CD8-positive, alpha-beta memory T cell (primary cell): ENCODE measurements at regions of chr3 and their contacts with region 1.

Region 1: DNA sequence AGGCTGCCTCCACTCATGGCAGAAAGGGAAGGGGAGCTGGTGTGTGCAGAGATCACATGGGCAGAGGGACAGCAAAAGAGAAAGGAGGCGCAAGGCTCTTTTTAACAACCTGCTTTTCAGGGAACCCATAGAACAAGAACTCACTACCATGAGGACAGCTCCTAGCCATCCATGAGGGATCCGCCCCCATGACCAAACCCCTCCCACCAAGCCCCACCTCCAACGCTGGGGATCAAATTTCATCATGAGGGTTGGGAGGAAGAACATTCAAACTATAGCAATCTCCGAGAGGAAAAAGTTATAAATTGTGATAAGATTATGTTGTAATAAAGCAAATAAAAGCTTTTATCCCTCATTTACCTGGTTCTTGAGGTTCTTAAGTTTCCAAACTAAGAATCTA is 84.7 kb upstream of the LMCD1 start:
- DNase-seq: no peak
- H3K4me3 ChIP-seq: no peak overlapping the region
- H3K4me3 Mint-ChIP-seq: no peak overlapping the region
- H3K27ac ChIP-seq: no peak overlapping the region
- H3K27ac Mint-ChIP-seq: peak overlapping the region in 3 of 8 donors; percentile 35 to 63 (median 44)
- H3K4me1 ChIP-seq: peaks cover 5% of the 10 kb centered on the region
- H3K4me1 Mint-ChIP-seq: peaks cover 5 to 8% (median 8%) of the 10 kb centered on the region in 3 donors
- H3K27me3 ChIP-seq: no peaks in the 10 kb centered on the region
- H3K27me3 Mint-ChIP-seq: peaks cover 3% of the 10 kb centered on the region in 2 donors

Region 2: DNA sequence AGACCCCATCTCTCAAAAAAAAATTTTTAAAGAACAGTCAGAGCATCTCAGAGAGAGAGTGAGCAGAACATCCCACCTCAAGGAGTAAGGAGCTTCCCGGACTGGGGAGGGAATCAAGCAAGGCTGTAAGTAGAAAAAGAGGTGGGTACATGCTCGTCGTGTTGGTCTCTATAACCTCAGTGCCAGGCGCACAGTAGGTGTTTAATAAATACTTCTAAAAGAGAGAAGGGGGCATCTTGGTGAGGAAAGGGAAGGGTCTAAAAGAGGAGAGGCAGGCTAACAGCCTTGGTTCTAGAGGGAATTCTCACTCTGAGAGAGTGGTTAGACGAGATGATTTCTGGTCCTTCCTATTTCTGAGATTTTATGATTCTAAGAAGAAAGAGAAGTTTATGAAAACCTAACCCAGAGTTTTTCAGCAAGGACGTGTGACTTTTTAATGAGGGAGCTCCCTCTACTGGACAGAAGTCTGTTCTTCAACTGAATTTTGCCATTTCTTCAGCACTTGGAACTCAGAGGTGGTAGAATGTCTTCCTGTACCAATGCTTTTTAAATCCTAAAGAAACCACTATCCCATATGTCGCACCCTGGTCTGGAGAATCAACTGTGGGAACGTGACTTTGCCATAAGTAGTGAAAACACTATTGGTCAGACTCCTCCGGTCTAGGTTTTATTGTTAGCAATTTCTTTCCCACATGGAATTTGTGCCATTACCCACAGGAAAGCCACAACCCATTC is 115.1 kb before region 1 on chr3:
- CTCF ChIA-PET with region 1: interaction called, 17 read pairs
- POLR2A ChIA-PET with region 1: no interaction called
- DNase-seq: peak in 2 of 5 donors; percentile 23 to 25
- H3K4me3 ChIP-seq: no peak overlapping the region
- H3K4me3 Mint-ChIP-seq: no peak overlapping the region
- H3K27ac ChIP-seq: no peak overlapping the region
- H3K27ac Mint-ChIP-seq: peak overlapping the region in 5 of 8 donors; percentile 14 to 84 (median 64)
- H3K4me1 ChIP-seq: no peaks in the 10 kb centered on the region
- H3K4me1 Mint-ChIP-seq: peaks cover 5 to 6% (median 6%) of the 10 kb centered on the region in 3 donors
- H3K27me3 ChIP-seq: no peaks in the 10 kb centered on the region
- H3K27me3 Mint-ChIP-seq: peaks cover 0 to 2% of the 10 kb centered on the region in 2 donors

Region 3: GRCh38 chr3:8324740-8325139 is 92.2 kb before region 1 on chr3:
- CTCF ChIA-PET with region 1: interaction called, 103 read pairs
- POLR2A ChIA-PET with region 1: no interaction called
- DNase-seq: peak; percentile 17 to 61 (median 49)
- H3K4me3 ChIP-seq: no peak overlapping the region
- H3K4me3 Mint-ChIP-seq: no peak overlapping the region
- H3K27ac ChIP-seq: no peak overlapping the region
- H3K27ac Mint-ChIP-seq: peak overlapping the region in 1 of 8 donors; percentile 48
- H3K4me1 ChIP-seq: peaks cover 6% of the 10 kb centered on the region
- H3K4me1 Mint-ChIP-seq: peaks cover 15 to 28% (median 24%) of the 10 kb centered on the region in 3 donors
- H3K27me3 ChIP-seq: no peaks in the 10 kb centered on the region
- H3K27me3 Mint-ChIP-seq: peaks cover 6 to 8% of the 10 kb centered on the region in 2 donors

Region 4: GRCh38 chr3:8406177-8406878 is 10.6 kb before region 1 on chr3:
- CTCF ChIA-PET with region 1: interaction called, 15 read pairs
- POLR2A ChIA-PET with region 1: no interaction called
- DNase-seq: no peak
- H3K4me3 ChIP-seq: no peak overlapping the region
- H3K4me3 Mint-ChIP-seq: no peak overlapping the region
- H3K27ac ChIP-seq: no peak overlapping the region
- H3K27ac Mint-ChIP-seq: no peak overlapping the region
- H3K4me1 ChIP-seq: no peaks in the 10 kb centered on the region
- H3K4me1 Mint-ChIP-seq: no peaks in the 10 kb centered on the region
- H3K27me3 ChIP-seq: no peaks in the 10 kb centered on the region
- H3K27me3 Mint-ChIP-seq: peaks cover 12 to 16% of the 10 kb centered on the region in 2 donors